Caco-2 (cell line): ENCODE measurements at regions of chr20 and their contacts with region 1.

Region 1: DNA sequence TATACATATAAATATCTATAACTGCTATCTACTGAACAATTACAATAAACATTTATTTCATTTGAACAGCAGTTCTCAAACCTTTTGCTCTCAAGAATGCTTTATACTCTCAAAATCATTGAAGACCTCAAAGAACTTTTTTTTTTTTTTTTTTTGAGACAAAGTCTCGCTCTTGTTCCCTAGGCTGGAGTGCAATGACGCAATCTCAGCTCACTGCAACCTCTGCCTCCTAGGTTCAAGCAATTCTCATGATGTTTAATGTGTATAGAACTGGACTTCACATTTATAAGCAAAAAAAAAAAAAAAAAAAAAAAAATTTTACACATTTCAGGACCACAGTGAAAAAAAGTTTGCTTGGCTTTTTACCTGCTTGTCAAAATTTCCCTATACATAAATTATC is 11.7 kb downstream of the UBE2V1 start:
- DNase-seq: peak in 1 of 2 experiments; percentile 45
- H3K4me3 ChIP-seq: no peak overlapping the region
- H3K4me3 Mint-ChIP-seq: no peak overlapping the region
- H3K27ac Mint-ChIP-seq: peak overlapping the region; percentile 34
- H3K4me1 ChIP-seq: peaks cover 69% of the 10 kb centered on the region
- H3K4me1 Mint-ChIP-seq: peaks cover 45% of the 10 kb centered on the region
- H3K27me3 ChIP-seq: no peaks in the 10 kb centered on the region
- H3K27me3 Mint-ChIP-seq: no peaks in the 10 kb centered on the region
- CTCF ChIP-seq: no peak

Region 2: DNA sequence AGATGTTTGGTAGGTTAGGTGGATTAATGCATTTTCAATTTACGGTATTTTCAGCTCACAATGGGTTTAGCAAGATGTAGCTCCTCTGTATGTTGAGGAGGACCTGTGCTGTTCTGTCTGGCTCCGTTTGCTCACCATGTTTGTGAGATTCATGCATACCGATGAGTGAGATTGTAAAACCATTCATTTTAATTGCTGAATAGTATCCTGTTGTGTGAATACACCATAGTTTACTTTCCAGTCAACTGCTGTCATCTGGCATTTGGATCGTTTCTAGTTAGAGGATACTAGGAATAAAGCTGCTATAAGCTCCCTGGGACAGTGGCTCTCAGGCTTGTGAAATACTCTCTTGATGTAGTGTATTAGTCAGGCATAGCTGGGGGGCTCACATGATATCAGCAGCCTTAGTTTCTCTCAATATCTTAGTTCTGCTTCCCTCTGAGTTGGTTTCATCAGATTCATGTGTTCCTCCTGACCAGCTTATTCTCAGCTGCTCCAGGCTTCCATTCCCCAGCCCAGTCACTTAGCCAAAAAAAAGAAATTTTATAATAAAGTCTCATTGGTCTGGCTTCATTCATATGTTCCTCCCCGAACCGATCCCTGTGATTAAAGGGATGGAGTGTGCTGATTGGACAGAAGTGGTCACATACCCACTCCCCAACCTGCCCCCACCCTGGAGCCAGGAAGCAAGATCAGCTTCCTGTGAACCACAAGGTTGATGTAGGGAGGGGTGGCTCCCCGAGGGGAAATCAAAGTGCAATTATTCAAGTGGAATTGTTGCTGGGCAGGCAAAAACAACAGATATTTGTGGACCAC is 376.7 kb before region 1 on chr20:
- CTCF ChIA-PET with region 1: no interaction called
- POLR2A ChIA-PET with region 1: no interaction called
- intact Hi-C with region 1: no loop called
- DNase-seq: no peak
- H3K4me3 ChIP-seq: no peak overlapping the region
- H3K4me3 Mint-ChIP-seq: no peak overlapping the region
- H3K27ac Mint-ChIP-seq: no peak overlapping the region
- H3K4me1 ChIP-seq: peaks cover 8% of the 10 kb centered on the region
- H3K4me1 Mint-ChIP-seq: no peaks in the 10 kb centered on the region
- H3K27me3 ChIP-seq: no peaks in the 10 kb centered on the region
- H3K27me3 Mint-ChIP-seq: no peaks in the 10 kb centered on the region
- CTCF ChIP-seq: no peak

Region 3: GRCh38 chr20:49948809-49949548 is 152.3 kb before region 1 on chr20:
- CTCF ChIA-PET with region 1: no interaction called
- POLR2A ChIA-PET with region 1: no interaction called
- intact Hi-C with region 1: no loop called
- DNase-seq: no peak
- H3K4me3 ChIP-seq: no peak overlapping the region
- H3K4me3 Mint-ChIP-seq: no peak overlapping the region
- H3K27ac Mint-ChIP-seq: peak overlapping the region; percentile 34
- H3K4me1 ChIP-seq: peaks cover 19% of the 10 kb centered on the region
- H3K4me1 Mint-ChIP-seq: peaks cover 14% of the 10 kb centered on the region
- H3K27me3 ChIP-seq: no peaks in the 10 kb centered on the region
- H3K27me3 Mint-ChIP-seq: no peaks in the 10 kb centered on the region
- CTCF ChIP-seq: no peak

Region 4: DNA sequence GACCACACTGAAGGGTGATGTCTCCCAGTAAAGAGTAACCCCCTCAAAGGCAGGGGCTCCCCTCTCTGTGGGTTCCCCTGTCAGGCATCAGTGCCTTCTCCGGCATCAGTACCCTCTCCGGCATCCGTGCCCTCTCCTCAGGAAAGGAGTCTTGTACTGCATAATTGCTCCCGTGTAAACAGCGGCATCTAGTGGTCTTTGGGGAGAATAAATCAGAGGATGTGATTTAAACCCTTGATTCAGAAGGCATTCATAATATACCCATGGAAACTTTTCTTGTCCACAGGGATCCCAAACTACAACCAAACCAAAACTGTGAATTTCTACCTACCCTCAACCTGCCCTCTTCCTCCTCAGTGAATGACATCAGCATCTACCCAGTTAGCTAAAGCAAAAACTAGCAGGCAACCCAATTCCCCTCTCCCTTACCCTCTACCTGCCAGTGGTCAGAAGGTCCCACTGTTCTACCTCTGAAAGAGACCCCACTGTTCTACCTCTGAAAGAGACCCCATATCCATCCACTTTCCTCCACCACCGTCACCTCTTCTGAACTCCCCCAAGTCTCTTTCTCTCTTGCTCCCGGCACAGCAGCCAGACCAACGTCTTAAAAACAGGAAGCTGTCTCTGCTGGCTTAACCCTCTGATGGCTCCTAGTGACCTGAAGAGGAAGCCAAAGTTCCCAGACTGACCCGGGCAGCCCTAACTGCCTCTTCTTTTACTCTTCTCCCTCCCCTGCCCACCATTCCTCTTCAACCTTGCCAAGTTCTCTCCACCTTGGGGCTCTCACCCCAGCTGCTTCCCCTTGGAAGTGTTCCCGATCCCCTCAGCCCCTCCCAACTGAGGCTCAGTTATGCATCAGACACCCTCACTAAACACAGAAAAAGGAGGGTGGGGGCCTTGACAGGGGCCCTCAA is 15.6 kb before region 1 on chr20:
- CTCF ChIA-PET with region 1: interaction called, 10 read pairs
- POLR2A ChIA-PET with region 1: no interaction called
- intact Hi-C with region 1: no loop called
- DNase-seq: peak; percentile 74 to 80
- H3K4me3 ChIP-seq: no peak overlapping the region
- H3K4me3 Mint-ChIP-seq: no peak overlapping the region
- H3K27ac Mint-ChIP-seq: no peak overlapping the region
- H3K4me1 ChIP-seq: peaks cover 8% of the 10 kb centered on the region; the same call in 1 of the 2 replicates
- H3K4me1 Mint-ChIP-seq: peaks cover 24% of the 10 kb centered on the region
- H3K27me3 ChIP-seq: no peaks in the 10 kb centered on the region
- H3K27me3 Mint-ChIP-seq: no peaks in the 10 kb centered on the region
- CTCF ChIP-seq: peak; percentile 95 to 96